ENCODE measurements at regions of chr12 and their contacts with region 1.

Region 1: GRCh38 chr12:77229640-77230442 is 164.5 kb upstream of the E2F7 start:
- DNase-seq: no peak
- ATAC-seq: peak; percentile 27

Region 2: GRCh38 chr12:77407931-77408330 is 178.1 kb after region 1 on chr12:
- intact Hi-C with region 1: loop called (anchors 5 kb)
- DNase-seq: no peak
- ATAC-seq: no peak

Measured in sciatic nerve (tissue), 2 donors.